MCF 10A (cell line): ENCODE measurements at regions of chr12 and their contacts with region 1.

Region 1: DNA sequence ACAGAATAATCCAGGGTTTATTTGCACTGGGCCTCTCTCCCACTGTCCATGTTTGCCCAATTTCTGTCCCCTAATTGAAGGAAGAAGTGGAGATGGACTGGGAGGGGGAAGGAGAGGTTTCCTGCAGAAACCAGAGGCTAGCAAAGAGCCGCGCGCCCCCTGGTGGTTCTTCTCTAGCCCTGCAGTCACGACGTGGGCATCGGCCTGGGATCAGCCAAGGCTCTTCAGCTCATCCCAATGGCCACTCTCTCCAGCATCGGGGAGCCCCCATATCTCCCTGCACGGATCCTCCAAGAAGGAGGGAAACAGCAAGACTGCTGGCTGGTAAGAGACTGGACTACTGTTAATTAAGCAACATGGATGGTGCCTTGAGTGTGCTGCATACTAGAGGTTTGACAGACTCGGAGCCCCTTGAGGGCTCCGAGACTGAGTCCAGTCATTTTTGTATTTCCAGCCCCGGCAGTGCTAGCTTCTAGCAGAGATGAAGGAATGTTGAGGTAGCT is 18.7 kb downstream of the ZBTB39 start:
- DNase-seq: peak; percentile 84
- H3K4me3 Mint-ChIP-seq: no peak overlapping the region
- H3K27ac Mint-ChIP-seq: no peak overlapping the region
- H3K4me1 Mint-ChIP-seq: peaks cover 25% of the 10 kb centered on the region
- H3K27me3 Mint-ChIP-seq: no peaks in the 10 kb centered on the region
- CTCF ChIP-seq: peak; percentile 89

Region 2: DNA sequence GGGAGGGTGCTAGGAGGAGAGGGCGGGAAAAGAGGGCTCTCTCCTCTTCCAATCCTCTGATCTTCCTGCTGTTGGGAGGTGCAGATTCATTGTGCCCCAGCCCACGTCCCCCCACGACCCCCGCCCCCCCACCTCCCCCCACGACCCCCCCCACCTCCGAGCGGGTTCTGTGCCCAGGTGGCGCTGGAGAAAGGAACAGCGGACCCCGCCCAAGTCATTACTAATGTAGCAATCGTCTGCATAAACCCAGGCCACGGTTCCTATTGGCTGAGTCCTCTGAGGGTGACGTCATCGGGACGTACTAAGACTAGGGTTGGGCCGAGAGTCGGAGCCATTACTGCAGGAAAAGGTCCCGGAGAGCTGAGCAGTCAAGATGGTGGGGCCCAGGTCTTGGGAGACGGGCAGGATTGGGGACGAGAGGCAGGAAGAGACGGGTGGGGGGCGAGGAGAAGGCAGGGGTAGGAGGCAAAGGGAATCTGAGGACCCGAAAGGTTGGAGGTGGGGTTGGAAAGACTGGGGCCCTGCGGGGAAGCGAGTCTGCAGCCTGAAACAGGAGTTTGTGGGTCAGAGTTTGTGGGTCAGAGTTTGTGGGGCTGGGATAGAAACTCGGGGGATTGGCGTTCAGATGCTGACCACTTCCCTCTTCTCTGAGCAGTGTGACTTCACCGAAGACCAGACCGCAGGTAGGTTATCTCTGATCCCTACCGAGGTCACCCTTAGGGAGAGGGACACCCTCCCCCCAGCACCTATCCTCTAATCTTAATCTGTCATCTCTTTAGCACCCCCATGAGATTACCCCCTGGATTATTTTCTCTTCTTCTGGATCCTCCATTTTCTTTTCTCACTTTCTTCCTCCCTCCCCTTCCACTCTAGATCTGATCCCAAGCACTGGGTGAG is 829.3 kb before region 1 on chr12 and contains the start of gene MYL6:
- CTCF ChIA-PET with region 1: no interaction called
- POLR2A ChIA-PET with region 1: no interaction called
- intact Hi-C with region 1: no loop called
- DNase-seq: peak; percentile 98
- H3K4me3 Mint-ChIP-seq: peak within 1 kb of the TSS; percentile 97
- H3K27ac Mint-ChIP-seq: peak within 1 kb of the TSS; percentile 100
- H3K4me1 Mint-ChIP-seq: peaks cover 35% of the 10 kb centered on the region
- H3K27me3 Mint-ChIP-seq: no peaks in the 10 kb centered on the region
- CTCF ChIP-seq: no peak
- total RNA-seq, gene MYL6: 716 and 997 TPM in 2 replicates

Region 3: DNA sequence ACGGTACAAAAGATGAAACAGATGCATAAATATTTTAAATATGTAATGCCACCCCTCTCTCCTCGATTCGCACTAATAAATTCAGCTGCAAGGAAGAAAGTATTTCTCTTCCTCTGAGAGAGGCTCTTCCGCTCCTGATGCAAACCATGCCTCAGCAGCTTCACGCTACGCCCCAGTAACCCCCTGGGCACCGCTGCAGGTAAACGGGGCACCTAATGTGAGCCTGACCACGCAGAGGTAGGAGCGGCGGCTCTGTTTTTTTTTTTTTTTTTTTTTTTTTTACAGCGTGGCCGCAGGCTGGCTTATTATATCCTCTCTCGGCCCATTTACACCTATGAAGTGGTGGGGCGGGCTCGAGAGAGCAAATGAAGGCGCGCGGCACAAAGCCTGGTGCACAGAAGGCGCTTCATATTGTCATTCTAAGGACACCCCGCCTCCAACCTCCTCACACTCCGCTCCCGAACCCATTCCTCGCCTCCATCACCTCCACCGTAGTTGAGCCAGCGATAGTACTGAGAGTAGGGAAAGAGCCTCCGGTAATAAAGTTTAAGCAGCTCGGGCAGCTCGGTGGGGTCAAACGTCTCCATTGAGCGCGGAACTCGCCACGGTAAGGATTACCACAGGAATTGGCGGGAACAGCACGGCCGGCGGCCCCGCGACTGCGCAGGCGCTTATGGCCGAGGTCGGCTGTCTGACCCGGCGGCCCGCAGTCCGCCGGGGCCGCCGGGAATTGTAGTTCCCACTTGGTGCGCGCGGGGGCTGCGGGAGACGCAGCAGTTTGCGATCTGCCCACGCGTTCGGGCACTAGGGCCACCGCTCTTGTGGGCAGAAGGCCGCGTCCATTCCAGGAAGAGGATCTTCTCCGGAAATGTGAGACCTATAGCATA is 235.6 kb before region 1 on chr12 and contains the start of gene PRIM1:
- CTCF ChIA-PET with region 1: interaction called, 212 read pairs
- POLR2A ChIA-PET with region 1: interaction called, 38 read pairs
- intact Hi-C with region 1: loop called (anchors 1 kb)
- DNase-seq: peak; percentile 80
- H3K4me3 Mint-ChIP-seq: peak within 1 kb of the TSS; percentile 87
- H3K27ac Mint-ChIP-seq: peak within 1 kb of the TSS; percentile 59
- H3K4me1 Mint-ChIP-seq: peaks cover 20% of the 10 kb centered on the region
- H3K27me3 Mint-ChIP-seq: no peaks in the 10 kb centered on the region
- CTCF ChIP-seq: peak; percentile 63
- total RNA-seq, gene PRIM1: 3.5 and 7.8 TPM in 2 replicates

Region 4: GRCh38 chr12:56839915-56840325 is 147.7 kb before region 1 on chr12:
- CTCF ChIA-PET with region 1: interaction called, 33 read pairs
- POLR2A ChIA-PET with region 1: interaction called, 7 read pairs
- intact Hi-C with region 1: loop called (anchors 1 kb)
- DNase-seq: peak; percentile 71
- H3K4me3 Mint-ChIP-seq: no peak overlapping the region
- H3K27ac Mint-ChIP-seq: no peak overlapping the region
- H3K4me1 Mint-ChIP-seq: peaks cover 30% of the 10 kb centered on the region
- H3K27me3 Mint-ChIP-seq: no peaks in the 10 kb centered on the region
- CTCF ChIP-seq: peak; percentile 54

Region 5: GRCh38 chr12:56900583-56900982 is 87.0 kb before region 1 on chr12:
- CTCF ChIA-PET with region 1: interaction called, 22 read pairs
- POLR2A ChIA-PET with region 1: interaction called, 8 read pairs
- intact Hi-C with region 1: loop called (anchors 1 kb)
- DNase-seq: peak; percentile 97
- H3K4me3 Mint-ChIP-seq: no peak overlapping the region
- H3K27ac Mint-ChIP-seq: peak overlapping the region; percentile 80
- H3K4me1 Mint-ChIP-seq: peaks cover 43% of the 10 kb centered on the region
- H3K27me3 Mint-ChIP-seq: no peaks in the 10 kb centered on the region
- CTCF ChIP-seq: no peak

Region 6: GRCh38 chr12:56998981-56999380 is 11.4 kb after region 1 on chr12:
- CTCF ChIA-PET with region 1: interaction called, 57 read pairs
- POLR2A ChIA-PET with region 1: no interaction called
- intact Hi-C with region 1: no loop called
- DNase-seq: no peak
- H3K4me3 Mint-ChIP-seq: no peak overlapping the region
- H3K27ac Mint-ChIP-seq: no peak overlapping the region
- H3K4me1 Mint-ChIP-seq: peaks cover 14% of the 10 kb centered on the region
- H3K27me3 Mint-ChIP-seq: no peaks in the 10 kb centered on the region
- CTCF ChIP-seq: no peak

Region 7: DNA sequence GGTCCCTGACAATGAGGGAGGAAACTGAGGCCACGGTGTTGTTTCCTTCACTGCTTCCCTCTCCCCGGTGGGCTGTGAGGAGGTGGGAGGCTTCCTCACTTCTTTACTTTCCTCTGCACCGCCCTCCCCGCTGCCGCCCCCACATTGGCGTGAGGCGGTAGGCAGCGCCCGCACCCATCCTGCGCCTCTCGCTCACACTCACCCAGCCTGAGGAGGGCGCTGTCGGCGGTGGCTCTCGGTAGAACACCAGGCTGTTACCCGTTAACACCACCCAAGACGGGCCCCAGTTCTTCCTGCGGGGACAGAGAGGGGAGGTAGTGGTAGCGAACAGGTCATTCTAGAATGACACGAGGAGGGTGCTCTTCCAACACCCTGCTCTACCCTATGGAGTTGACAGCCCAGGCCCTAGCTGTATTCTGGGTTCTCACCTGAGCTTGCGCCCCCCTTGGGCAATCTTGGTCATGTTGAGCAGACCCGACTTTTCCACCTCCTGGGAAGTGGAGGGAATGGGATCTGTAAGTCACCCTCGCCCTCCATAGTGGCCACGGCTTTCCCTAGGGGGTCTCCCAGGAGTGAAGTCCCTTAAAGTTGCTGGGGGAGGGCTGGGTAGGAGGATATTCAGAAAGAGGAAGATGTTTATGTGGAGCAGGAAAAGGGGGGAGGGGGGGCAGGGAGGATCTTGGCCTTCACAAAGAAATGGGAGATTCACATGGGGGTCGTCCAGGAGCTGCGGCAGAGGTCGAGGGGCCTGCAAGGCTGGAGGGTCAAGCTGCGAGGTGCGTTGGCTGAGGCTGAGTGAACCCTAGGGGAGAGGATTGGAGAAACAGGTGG is 488.8 kb after region 1 on chr12:
- CTCF ChIA-PET with region 1: no interaction called
- POLR2A ChIA-PET with region 1: no interaction called
- intact Hi-C with region 1: no loop called
- DNase-seq: no peak
- H3K4me3 Mint-ChIP-seq: no peak overlapping the region
- H3K27ac Mint-ChIP-seq: no peak overlapping the region
- H3K4me1 Mint-ChIP-seq: peaks cover 7% of the 10 kb centered on the region
- H3K27me3 Mint-ChIP-seq: peaks cover 89% of the 10 kb centered on the region
- CTCF ChIP-seq: no peak